Panc1 (cell line): ENCODE measurements at regions of chr20 and their contacts with region 1.

Region 1: DNA sequence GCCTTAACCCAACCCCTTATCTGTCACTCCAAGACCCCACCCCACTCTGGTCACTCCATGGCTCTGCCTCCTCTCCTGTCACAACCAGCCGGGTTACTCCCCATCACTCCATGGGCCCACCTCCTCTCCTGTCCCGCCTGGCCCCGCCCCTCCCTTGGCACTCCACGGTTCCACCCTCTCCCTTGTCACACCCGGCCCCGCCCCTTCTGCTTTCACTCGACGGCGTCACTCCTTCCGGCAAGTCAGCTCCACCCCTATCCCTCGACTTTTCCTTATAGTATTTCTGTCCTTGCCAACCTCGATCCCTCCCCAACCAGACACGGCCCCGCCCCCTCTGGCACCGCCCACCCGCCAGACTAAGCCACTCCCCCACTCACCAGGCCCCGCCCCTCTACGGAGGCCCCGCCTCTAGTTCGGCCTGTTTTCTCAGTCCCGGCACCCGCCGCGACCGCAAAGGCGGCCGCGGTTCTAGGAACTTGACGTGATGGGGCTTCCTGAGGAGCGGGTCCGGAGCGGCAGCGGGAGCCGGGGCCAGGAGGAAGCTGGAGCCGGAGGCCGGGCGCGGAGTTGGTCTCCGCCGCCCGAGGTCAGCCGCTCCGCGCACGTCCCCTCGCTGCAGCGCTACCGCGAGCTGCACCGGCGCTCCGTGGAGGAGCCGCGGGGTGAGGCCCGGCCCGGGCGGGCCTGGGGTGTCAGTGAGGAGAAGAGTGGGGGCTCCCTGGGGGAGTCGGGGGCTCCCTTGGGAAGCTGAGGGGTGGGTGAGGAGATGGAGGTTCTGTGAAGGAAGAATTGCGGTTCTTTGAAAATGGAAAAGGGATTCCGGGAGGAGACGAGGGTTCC is at the start of gene ACSS2:
- DNase-seq: peak; percentile 95
- ATAC-seq: peak; percentile 90
- H3K4me3 ChIP-seq: peak within 1 kb of the TSS; percentile 71 to 91
- H3K27ac ChIP-seq: peak within 1 kb of the TSS; percentile 67
- H3K4me1 ChIP-seq: peaks cover 12% of the 10 kb centered on the region
- H3K27me3 ChIP-seq: no peaks in the 10 kb centered on the region
- CTCF ChIP-seq: no peak
- total RNA-seq, gene ACSS2: 25.4 TPM

Region 2: GRCh38 chr20:34302723-34303528 is 573.5 kb before region 1 on chr20 and contains the start of gene AHCY:
- CTCF ChIA-PET with region 1: no interaction called
- POLR2A ChIA-PET with region 1: no interaction called
- in situ Hi-C with region 1: no loop called
- intact Hi-C with region 1: no loop called
- DNase-seq: peak; percentile 92
- ATAC-seq: peak; percentile 98
- H3K4me3 ChIP-seq: peak within 1 kb of the TSS; percentile 81 to 97
- H3K27ac ChIP-seq: peak within 1 kb of the TSS; percentile 94
- H3K4me1 ChIP-seq: peaks cover 25% of the 10 kb centered on the region
- H3K27me3 ChIP-seq: no peaks in the 10 kb centered on the region
- CTCF ChIP-seq: no peak
- total RNA-seq, gene AHCY: 171 TPM

Region 3: DNA sequence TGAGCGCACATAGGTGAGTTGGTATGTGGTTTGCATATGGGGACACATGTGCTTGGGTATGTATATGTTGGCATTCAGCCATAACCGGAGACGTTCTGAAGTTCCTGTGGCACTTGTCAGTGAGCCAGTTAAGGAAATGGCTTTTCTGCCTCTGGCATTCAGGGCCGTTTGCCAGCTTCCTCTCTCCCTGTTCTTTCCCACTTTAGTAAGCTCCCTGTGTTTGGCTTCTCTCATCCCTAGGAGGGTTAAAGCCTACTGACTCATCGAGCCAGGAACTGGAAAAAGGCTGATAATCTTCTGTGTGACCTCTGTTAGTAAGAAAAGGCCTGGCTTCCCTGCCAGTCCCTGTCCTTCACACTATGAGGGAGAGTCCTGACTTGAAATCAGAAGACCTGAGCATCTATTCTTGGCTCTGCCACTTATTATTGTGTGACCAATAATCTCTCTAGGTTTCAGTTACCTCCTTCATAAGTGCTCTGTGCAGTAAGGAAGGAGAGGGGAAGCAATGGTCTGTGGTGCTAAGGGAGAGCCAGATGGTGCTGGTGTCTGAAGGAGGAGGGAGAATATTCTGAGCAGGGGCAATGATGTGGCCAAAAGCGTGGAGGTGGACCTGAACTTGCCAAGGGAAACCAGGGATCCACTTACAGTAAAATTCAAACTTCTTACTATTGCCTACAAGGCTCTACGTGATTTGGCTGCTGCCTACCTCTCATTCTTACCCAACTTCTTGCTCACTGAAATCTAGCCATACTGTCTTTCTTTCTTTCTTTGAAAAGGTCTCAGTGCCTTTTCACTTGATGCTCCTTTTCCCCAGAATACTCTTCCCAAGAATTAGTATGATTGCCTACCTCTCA is 31.5 kb after region 1 on chr20:
- CTCF ChIA-PET with region 1: interaction called, 5 read pairs
- POLR2A ChIA-PET with region 1: interaction called, 13 read pairs
- in situ Hi-C with region 1: no loop called
- intact Hi-C with region 1: no loop called
- DNase-seq: peak; percentile 76
- ATAC-seq: peak; percentile 94
- H3K4me3 ChIP-seq: peak overlapping the region in 1 of 2 experiments; percentile 0; a peak in 1 of 4 replicates
- H3K27ac ChIP-seq: peak overlapping the region; percentile 32
- H3K4me1 ChIP-seq: peaks cover 8% of the 10 kb centered on the region
- H3K27me3 ChIP-seq: no peaks in the 10 kb centered on the region
- CTCF ChIP-seq: no peak

Region 4: DNA sequence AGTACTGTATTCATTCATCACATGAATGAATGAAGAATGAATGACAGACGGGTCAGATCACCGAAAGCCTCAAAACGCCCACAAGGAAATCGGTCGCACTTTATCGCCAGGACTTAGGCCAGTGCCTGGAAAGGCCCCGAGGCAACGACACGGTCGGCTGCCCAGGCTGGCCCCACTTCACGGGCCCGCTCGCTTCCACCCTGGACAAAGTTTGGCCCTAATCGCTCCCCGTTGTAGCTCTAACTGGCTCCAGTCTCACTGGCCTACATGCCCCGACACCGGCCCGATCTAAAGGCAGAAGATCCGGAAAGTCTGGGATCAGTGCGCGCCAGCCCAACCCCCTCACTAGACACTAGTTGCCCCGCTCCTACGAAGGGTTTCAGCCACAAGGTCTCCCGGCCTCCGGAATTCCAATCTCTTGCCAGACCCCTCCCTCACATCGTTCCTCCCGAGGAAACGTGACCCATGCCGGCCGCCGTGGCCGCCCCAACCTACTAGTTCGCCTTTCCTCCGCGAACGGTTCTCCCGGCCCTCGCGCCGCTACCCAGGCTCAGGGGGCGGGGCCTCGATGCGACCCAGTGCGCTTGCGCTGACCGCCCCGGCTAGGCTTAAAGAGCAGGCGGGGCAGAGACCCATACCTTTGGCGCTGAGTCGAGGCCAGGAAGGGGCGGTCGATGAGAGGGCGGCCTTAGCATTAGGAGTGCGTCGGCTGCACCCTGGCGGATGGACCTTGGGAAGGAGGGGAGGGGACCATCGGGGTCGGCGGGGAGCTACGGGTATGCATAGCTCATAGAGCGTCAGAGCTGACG is 79.1 kb after region 1 on chr20 and contains the starts of genes GSS and MYH7B:
- CTCF ChIA-PET with region 1: interaction called, 9 read pairs
- POLR2A ChIA-PET with region 1: no interaction called
- in situ Hi-C with region 1: no loop called
- intact Hi-C with region 1: loop called (anchors 2 kb)
- DNase-seq: peak; percentile 73
- ATAC-seq: peak; percentile 97
- H3K4me3 ChIP-seq: peak within 1 kb of the TSS; percentile 69 to 92
- H3K27ac ChIP-seq: peak within 1 kb of the TSS; percentile 93
- H3K4me1 ChIP-seq: peaks cover 11% of the 10 kb centered on the region
- H3K27me3 ChIP-seq: no peaks in the 10 kb centered on the region
- CTCF ChIP-seq: peak; percentile 70
- total RNA-seq, gene GSS: 64.8 TPM
- total RNA-seq, gene MYH7B: 0.59 TPM

Region 5: DNA sequence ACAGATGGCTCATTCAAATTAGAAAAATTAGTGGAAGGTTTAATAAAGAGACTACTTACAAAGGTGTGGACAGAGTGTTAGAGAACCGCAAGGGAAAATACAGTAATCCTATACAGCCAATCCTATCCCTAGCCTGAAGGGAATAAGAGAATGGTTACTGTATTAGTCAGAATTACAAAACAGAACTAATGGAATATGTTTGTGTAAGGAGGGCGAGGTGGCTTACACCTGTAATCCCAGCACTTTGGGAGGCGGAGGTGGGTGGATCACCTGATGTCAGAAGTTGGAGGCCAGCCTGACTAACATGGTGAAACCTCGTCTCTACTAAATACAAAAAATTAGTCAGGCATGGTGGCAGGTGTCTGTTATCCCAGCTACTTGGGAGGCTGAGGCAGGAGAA is 232.5 kb after region 1 on chr20:
- CTCF ChIA-PET with region 1: no interaction called
- POLR2A ChIA-PET with region 1: interaction called, 10 read pairs
- in situ Hi-C with region 1: no loop called
- intact Hi-C with region 1: no loop called
- DNase-seq: no peak
- ATAC-seq: no peak
- H3K4me3 ChIP-seq: no peak overlapping the region
- H3K27ac ChIP-seq: no peak overlapping the region
- H3K4me1 ChIP-seq: no peaks in the 10 kb centered on the region
- H3K27me3 ChIP-seq: no peaks in the 10 kb centered on the region
- CTCF ChIP-seq: no peak

Region 6: DNA sequence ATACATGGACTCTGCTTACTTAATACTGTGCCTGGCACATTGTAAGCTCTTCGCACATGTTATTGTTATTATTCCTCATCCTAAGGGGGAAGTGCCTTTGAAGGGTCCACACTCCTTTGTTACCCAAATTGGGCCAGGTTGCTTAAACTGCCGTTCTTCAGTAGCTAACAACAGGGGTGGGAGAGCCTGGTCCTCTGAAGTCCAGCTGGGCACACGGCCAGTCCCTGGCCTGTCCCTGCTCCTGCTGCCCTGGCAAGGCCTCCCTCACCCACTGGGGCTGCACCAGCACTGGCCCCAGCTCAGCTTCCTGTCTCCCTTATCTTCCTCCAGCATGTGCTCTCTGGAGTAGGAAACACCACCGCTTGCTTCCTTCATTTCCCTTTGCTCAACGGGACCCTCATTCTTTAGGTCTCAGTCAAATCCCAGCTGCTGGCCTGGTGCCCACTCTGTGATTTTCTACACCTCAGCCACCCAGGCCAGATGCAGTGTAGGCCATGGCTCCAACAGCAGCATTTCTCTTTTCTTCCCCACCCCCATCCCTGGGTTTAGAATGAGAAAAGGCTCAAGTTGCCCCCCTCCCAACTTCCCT is 290.0 kb after region 1 on chr20:
- CTCF ChIA-PET with region 1: interaction called, 16 read pairs
- POLR2A ChIA-PET with region 1: no interaction called
- in situ Hi-C with region 1: no loop called
- intact Hi-C with region 1: no loop called
- DNase-seq: no peak
- ATAC-seq: peak; percentile 68; the same call in 1 of the 2 replicates
- H3K4me3 ChIP-seq: no peak overlapping the region
- H3K27ac ChIP-seq: no peak overlapping the region
- H3K4me1 ChIP-seq: peaks cover 3% of the 10 kb centered on the region; the same call in 1 of the 2 replicates
- H3K27me3 ChIP-seq: no peaks in the 10 kb centered on the region
- CTCF ChIP-seq: no peak